Naive thymus-derived CD4-positive, alpha-beta T cell (primary cell): ENCODE measurements at regions of chr6 and their contacts with region 1.

Region 1: GRCh38 chr6:108052706-108053105 is 21.8 kb downstream of the OSTM1 start:
- DNase-seq: no peak
- ATAC-seq: no peak
- H3K4me3 ChIP-seq: no peak overlapping the region
- H3K4me3 Mint-ChIP-seq: no peak overlapping the region
- H3K27ac ChIP-seq: no peak overlapping the region
- H3K27ac Mint-ChIP-seq: peak overlapping the region in 1 of 9 donors; percentile 66
- H3K4me1 ChIP-seq: no peaks in the 10 kb centered on the region
- H3K4me1 Mint-ChIP-seq: peaks cover 0 to 5% (median 0%) of the 10 kb centered on the region in 7 donors
- H3K27me3 ChIP-seq: no peaks in the 10 kb centered on the region
- H3K27me3 Mint-ChIP-seq: no peaks in the 10 kb centered on the region

Region 2: GRCh38 chr6:107866606-107867301 is 186.0 kb before region 1 on chr6:
- CTCF ChIA-PET with region 1: interaction called, 3 read pairs
- POLR2A ChIA-PET with region 1: no interaction called
- intact Hi-C with region 1: loop called (anchors 5 kb)
- DNase-seq: peak in 7 of 9 donors; percentile 29 to 64 (median 52)
- ATAC-seq: peak; percentile 76
- H3K4me3 ChIP-seq: no peak overlapping the region
- H3K4me3 Mint-ChIP-seq: peak overlapping the region in 1 of 10 donors; percentile 32
- H3K27ac ChIP-seq: no peak overlapping the region
- H3K27ac Mint-ChIP-seq: peak overlapping the region in 3 of 9 donors; percentile 37 to 64 (median 45)
- H3K4me1 ChIP-seq: no peaks in the 10 kb centered on the region
- H3K4me1 Mint-ChIP-seq: peaks cover 0 to 10% (median 4%) of the 10 kb centered on the region in 7 donors
- H3K27me3 ChIP-seq: no peaks in the 10 kb centered on the region
- H3K27me3 Mint-ChIP-seq: peaks cover 0 to 10% (median 0%) of the 10 kb centered on the region in 5 donors

Region 3: GRCh38 chr6:107982486-107982885 is 70.2 kb before region 1 on chr6:
- CTCF ChIA-PET with region 1: no interaction called
- POLR2A ChIA-PET with region 1: no interaction called
- intact Hi-C with region 1: loop called (anchors 2 to 5 kb)
- DNase-seq: no peak
- ATAC-seq: no peak
- H3K4me3 ChIP-seq: no peak overlapping the region
- H3K4me3 Mint-ChIP-seq: no peak overlapping the region
- H3K27ac ChIP-seq: no peak overlapping the region
- H3K27ac Mint-ChIP-seq: peak overlapping the region in 1 of 9 donors; percentile 3
- H3K4me1 ChIP-seq: no peaks in the 10 kb centered on the region
- H3K4me1 Mint-ChIP-seq: peaks cover 0 to 3% (median 0%) of the 10 kb centered on the region in 7 donors
- H3K27me3 ChIP-seq: no peaks in the 10 kb centered on the region
- H3K27me3 Mint-ChIP-seq: peaks cover 0 to 14% (median 0%) of the 10 kb centered on the region in 5 donors

Region 4: GRCh38 chr6:108383984-108384383 is 331.3 kb after region 1 on chr6:
- CTCF ChIA-PET with region 1: no interaction called
- POLR2A ChIA-PET with region 1: no interaction called
- intact Hi-C with region 1: no loop called
- DNase-seq: no peak
- ATAC-seq: no peak
- H3K4me3 ChIP-seq: no peak overlapping the region
- H3K4me3 Mint-ChIP-seq: no peak overlapping the region
- H3K27ac ChIP-seq: no peak overlapping the region
- H3K27ac Mint-ChIP-seq: no peak overlapping the region
- H3K4me1 ChIP-seq: no peaks in the 10 kb centered on the region
- H3K4me1 Mint-ChIP-seq: no peaks in the 10 kb centered on the region
- H3K27me3 ChIP-seq: no peaks in the 10 kb centered on the region
- H3K27me3 Mint-ChIP-seq: peaks cover 0 to 2% (median 0%) of the 10 kb centered on the region in 5 donors